ENCODE measurements at regions of chr10 and their contacts with region 1.

Region 1: DNA sequence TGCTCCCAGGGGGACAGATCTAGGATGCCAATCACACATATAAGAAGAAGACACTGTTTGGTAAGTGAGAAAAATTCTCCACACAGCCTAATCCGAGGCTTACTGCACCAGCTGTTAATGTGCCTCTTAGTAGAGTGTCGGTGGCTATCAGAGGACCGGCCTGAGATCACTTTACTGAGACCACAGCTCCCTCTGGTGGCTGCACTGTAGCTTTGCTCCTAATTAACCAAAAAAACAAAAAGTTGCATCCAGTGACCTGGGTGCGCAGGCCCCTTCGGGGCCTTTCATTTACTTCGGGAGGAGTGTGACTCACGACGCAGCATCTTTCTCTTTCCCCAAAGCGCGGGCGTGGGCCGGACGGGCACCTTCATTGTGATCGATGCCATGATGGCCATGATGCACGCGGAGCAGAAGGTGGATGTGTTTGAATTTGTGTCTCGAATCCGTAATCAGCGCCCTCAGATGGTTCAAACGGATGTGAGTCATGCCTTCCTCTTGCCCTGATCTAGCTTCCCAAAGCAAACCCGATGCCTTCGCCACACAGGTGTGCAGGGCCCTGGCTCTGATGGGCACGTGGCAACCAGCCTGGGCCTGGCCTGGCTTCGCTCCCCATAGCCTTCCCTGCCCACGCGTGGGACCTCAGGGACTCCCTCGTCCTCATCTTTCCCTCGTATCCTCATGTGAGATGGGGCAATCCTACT is 56.7 kb downstream of the MKI67 start:
- DNase-seq: peak in 8 of 10 donors; percentile 64 to 81 (median 69)
- H3K4me3 ChIP-seq: peak overlapping the region in 1 of 59 donors; percentile 19
- H3K27ac ChIP-seq: peak overlapping the region in 3 of 59 donors; percentile 15 to 68 (median 18)
- H3K27me3 ChIP-seq: no peaks in the 10 kb centered on the region
- CTCF ChIP-seq: peak; percentile 78 to 97 (median 91)

Region 2: GRCh38 chr10:127715782-127716378 is 353.6 kb before region 1 on chr10:
- intact Hi-C with region 1: loop called in 1 of 2 experiments (anchors 2 kb)
- DNase-seq: no peak
- H3K4me3 ChIP-seq: no peak overlapping the region
- H3K27ac ChIP-seq: peak overlapping the region in 10 of 59 donors; percentile 4 to 65 (median 24)
- H3K27me3 ChIP-seq: peaks cover 0 to 2% (median 0%) of the 10 kb centered on the region in 45 donors
- CTCF ChIP-seq: peak; percentile 48 to 85 (median 67)

Region 3: GRCh38 chr10:127906548-127907377 is 162.7 kb before region 1 on chr10 and contains the start of gene PTPRE:
- intact Hi-C with region 1: loop called (anchors 1 to 2 kb)
- DNase-seq: peak in 9 of 10 donors; percentile 48 to 86 (median 67)
- H3K4me3 ChIP-seq: peak within 1 kb of the TSS; percentile 48 to 96 (median 77)
- H3K27ac ChIP-seq: peak within 1 kb of the TSS in 58 of 59 donors; percentile 29 to 95 (median 88)
- H3K27me3 ChIP-seq: no peaks in the 10 kb centered on the region
- CTCF ChIP-seq: peak in 54 of 56 donors; percentile 28 to 95 (median 72)
- total RNA-seq, gene PTPRE: 26.2 to 55.9 (median 39.1) TPM

Region 4: GRCh38 chr10:127990846-127991542 is 78.5 kb before region 1 on chr10:
- intact Hi-C with region 1: no loop called
- DNase-seq: no peak
- H3K4me3 ChIP-seq: no peak overlapping the region
- H3K27ac ChIP-seq: peak overlapping the region in 4 of 59 donors; percentile 2 to 50 (median 10)
- H3K27me3 ChIP-seq: no peaks in the 10 kb centered on the region
- CTCF ChIP-seq: no peak

Region 5: DNA sequence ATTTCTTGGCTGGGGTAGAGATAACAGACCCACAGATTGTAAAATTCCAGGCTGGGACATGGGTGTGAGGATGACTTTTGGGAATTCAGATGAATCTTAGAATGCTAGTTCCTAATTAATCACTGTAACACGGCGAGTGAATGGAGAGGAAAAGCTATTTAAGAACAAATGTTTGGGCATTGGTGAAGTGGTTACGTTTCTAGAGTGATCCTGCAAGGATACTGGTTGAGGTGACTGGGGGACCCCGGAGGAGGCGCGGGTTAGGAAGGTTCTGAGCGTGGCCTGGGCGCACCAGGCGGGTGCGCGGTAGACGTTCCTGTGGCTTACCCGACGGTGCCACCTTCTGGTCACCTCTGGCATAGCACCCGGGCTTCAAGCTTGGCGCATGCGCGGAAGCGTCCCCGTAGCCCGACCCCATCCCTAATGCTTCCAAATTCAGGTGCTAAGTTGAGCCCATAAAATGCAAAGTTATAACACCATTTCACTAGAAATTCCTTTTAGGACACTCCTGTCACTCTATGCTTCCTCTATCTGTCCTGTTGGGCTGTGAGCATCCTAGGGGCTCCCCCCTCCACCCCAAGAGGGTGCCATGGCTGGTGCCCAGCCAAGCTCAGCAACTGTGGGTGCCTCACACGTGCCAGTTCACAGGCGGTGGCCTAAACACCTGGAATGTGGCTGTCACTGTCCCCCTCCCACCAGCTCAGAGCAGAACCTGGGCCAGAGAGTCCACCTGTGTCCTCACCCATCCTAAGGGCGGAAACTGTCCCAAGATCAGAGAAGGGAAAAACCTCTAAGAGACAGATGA is 58.1 kb before region 1 on chr10:
- intact Hi-C with region 1: loop called (anchors 2 to 10 kb)
- DNase-seq: peak; percentile 74 to 89 (median 83)
- H3K4me3 ChIP-seq: peak overlapping the region in 55 of 59 donors; percentile 1 to 61 (median 33)
- H3K27ac ChIP-seq: peak overlapping the region in 3 of 59 donors; percentile 9 to 44 (median 28)
- H3K27me3 ChIP-seq: no peaks in the 10 kb centered on the region
- CTCF ChIP-seq: peak; percentile 89 to 100 (median 99)

Region 6: GRCh38 chr10:128036746-128037543 is 32.6 kb before region 1 on chr10:
- intact Hi-C with region 1: loop called in 1 of 2 experiments (anchors 2 kb)
- DNase-seq: no peak
- H3K4me3 ChIP-seq: no peak overlapping the region
- H3K27ac ChIP-seq: no peak overlapping the region
- H3K27me3 ChIP-seq: no peaks in the 10 kb centered on the region
- CTCF ChIP-seq: no peak